Activated CD4-positive, alpha-beta memory T cell treated with anti-CD3 and anti-CD28 coated beads, Interleukin-2, amount 10 ng/mL, durations not matched to agents 7 days and 5 days (primary cell): ENCODE measurements at regions of chr9 and their contacts with region 1.

Region 1: DNA sequence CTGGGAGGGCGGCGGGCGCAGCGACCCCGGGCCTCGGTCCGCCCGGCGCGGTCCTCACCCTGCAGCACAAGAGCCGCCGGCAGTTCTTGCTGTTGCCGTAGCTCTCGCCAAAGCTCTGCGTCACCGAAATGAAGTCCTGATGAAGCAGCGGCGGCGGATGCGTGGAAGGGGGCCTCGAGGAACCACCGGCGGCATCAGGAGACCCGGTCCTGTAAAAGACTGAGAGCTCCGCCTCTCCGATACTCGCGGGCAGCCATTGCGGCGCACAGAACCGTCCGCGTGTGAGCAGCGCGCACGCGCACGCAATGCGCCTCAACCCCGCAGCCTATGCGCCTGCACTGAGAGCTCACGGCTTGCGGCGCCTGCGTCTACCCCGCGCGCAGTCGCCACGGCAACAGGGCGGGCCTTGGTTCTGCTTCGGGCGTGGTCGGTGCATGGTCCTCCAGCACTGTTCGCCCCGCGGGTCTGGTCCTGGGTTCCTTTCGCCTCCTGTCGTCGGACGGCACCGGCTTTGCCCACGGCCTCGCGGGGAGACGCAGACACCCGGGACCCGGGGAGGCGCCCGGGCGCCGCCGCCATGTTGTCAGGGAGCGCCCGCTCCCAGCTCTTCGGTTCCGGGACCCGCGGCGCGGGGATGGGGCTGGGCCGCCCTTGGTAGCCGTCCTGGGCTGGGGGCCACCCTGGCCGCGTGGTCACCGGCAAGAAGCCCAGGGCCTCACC is 9.3 kb upstream of the GRIN1 start:
- DNase-seq: peak; percentile 93
- H3K4me3 Mint-ChIP-seq: peak overlapping the region; percentile 81
- H3K27ac Mint-ChIP-seq: peak overlapping the region; percentile 83
- H3K4me1 Mint-ChIP-seq: peaks cover 30% of the 10 kb centered on the region
- H3K27me3 Mint-ChIP-seq: peaks cover 4% of the 10 kb centered on the region

Region 2: GRCh38 chr9:136858844-136859757 is 270.5 kb before region 1 on chr9:
- CTCF ChIA-PET with region 1: no interaction called
- POLR2A ChIA-PET with region 1: no interaction called
- DNase-seq: no peak
- H3K4me3 Mint-ChIP-seq: no peak overlapping the region
- H3K27ac Mint-ChIP-seq: no peak overlapping the region
- H3K4me1 Mint-ChIP-seq: peaks cover 8% of the 10 kb centered on the region
- H3K27me3 Mint-ChIP-seq: no peaks in the 10 kb centered on the region

Region 3: GRCh38 chr9:137070201-137070905 is 59.3 kb before region 1 on chr9 and contains the start of gene SAPCD2:
- CTCF ChIA-PET with region 1: interaction called, 10 read pairs
- POLR2A ChIA-PET with region 1: interaction called, 3 read pairs
- DNase-seq: peak; percentile 90
- H3K4me3 Mint-ChIP-seq: peak within 1 kb of the TSS; percentile 73
- H3K27ac Mint-ChIP-seq: peak within 1 kb of the TSS; percentile 63
- H3K4me1 Mint-ChIP-seq: peaks cover 37% of the 10 kb centered on the region
- H3K27me3 Mint-ChIP-seq: no peaks in the 10 kb centered on the region
- total RNA-seq, gene SAPCD2: 26.8 to 27.0 TPM

Region 4: GRCh38 chr9:137114610-137115391 is 14.8 kb before region 1 on chr9 and contains the start of gene DPP7:
- CTCF ChIA-PET with region 1: interaction called, 3 read pairs
- POLR2A ChIA-PET with region 1: interaction called, 34 read pairs
- DNase-seq: peak; percentile 84
- H3K4me3 Mint-ChIP-seq: peak within 1 kb of the TSS; percentile 69
- H3K27ac Mint-ChIP-seq: peak within 1 kb of the TSS; percentile 56
- H3K4me1 Mint-ChIP-seq: peaks cover 5% of the 10 kb centered on the region
- H3K27me3 Mint-ChIP-seq: no peaks in the 10 kb centered on the region
- total RNA-seq, gene DPP7: 253 to 257 TPM

Region 5: DNA sequence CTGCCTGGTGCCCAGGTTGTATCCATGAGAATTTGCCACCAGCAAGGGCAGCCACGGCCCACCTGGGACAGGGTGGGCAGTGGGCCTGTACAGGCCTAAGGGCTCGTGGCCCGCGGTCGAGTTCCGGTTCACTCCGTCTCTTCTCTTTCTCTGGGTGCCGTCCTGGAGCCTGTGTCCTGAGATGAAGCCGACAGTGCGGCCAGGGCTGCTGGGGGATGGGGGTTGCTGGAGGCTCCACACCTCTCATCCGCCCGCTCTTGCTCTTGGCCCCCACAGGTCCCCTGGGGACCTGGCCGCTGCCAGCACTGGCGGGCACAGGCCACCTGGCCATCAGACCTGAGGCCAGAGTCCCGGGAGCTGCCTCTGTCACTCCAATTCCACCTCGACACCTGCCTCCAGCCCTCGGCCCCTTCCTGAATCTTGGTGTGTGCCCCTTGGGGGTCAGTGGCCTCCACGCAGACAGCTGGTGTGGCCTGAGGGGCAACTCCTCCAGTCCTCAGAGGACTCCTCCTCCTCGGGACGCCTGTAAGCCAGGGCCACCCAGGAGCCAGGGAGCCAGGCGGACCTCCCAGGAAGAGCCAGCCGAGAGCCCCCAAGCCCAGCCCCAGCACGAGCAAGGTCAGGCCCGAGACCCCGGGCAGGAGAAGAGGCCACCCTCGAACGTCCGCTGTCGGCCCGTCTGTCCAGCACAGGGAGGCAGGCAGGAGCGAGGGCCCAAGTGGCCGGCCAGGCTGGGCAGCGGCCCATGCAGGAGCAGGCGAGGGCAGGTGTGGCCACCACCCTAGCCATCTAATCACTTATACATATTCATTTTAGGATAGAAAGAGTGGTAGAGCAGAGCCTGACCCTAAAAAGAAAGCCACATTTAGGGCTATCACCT is 35.0 kb after region 1 on chr9:
- CTCF ChIA-PET with region 1: no interaction called
- POLR2A ChIA-PET with region 1: no interaction called
- DNase-seq: no peak
- H3K4me3 Mint-ChIP-seq: no peak overlapping the region
- H3K27ac Mint-ChIP-seq: no peak overlapping the region
- H3K4me1 Mint-ChIP-seq: peaks cover 3% of the 10 kb centered on the region
- H3K27me3 Mint-ChIP-seq: peaks cover 23% of the 10 kb centered on the region

Region 6: GRCh38 chr9:137188490-137189296 is 59.1 kb after region 1 on chr9 and contains the starts of genes ANAPC2 and SSNA1:
- CTCF ChIA-PET with region 1: interaction called, 12 read pairs
- POLR2A ChIA-PET with region 1: interaction called, 14 read pairs
- DNase-seq: peak; percentile 94
- H3K4me3 Mint-ChIP-seq: peak within 1 kb of the TSS; percentile 93
- H3K27ac Mint-ChIP-seq: peak within 1 kb of the TSS; percentile 97
- H3K4me1 Mint-ChIP-seq: peaks cover 40% of the 10 kb centered on the region
- H3K27me3 Mint-ChIP-seq: no peaks in the 10 kb centered on the region
- total RNA-seq, gene ANAPC2: 53.3 to 57.8 TPM
- total RNA-seq, gene SSNA1: 70.0 to 76.3 TPM

Region 7: GRCh38 chr9:137223078-137223970 is 93.7 kb after region 1 on chr9:
- CTCF ChIA-PET with region 1: interaction called, 6 read pairs
- POLR2A ChIA-PET with region 1: interaction called, 19 read pairs
- DNase-seq: peak; percentile 99
- H3K4me3 Mint-ChIP-seq: peak overlapping the region; percentile 74
- H3K27ac Mint-ChIP-seq: peak overlapping the region; percentile 79
- H3K4me1 Mint-ChIP-seq: peaks cover 27% of the 10 kb centered on the region
- H3K27me3 Mint-ChIP-seq: no peaks in the 10 kb centered on the region